Posterior vena cava (tissue), 2 donors: ENCODE measurements at regions of chr7 and their contacts with region 1.

Region 1: DNA sequence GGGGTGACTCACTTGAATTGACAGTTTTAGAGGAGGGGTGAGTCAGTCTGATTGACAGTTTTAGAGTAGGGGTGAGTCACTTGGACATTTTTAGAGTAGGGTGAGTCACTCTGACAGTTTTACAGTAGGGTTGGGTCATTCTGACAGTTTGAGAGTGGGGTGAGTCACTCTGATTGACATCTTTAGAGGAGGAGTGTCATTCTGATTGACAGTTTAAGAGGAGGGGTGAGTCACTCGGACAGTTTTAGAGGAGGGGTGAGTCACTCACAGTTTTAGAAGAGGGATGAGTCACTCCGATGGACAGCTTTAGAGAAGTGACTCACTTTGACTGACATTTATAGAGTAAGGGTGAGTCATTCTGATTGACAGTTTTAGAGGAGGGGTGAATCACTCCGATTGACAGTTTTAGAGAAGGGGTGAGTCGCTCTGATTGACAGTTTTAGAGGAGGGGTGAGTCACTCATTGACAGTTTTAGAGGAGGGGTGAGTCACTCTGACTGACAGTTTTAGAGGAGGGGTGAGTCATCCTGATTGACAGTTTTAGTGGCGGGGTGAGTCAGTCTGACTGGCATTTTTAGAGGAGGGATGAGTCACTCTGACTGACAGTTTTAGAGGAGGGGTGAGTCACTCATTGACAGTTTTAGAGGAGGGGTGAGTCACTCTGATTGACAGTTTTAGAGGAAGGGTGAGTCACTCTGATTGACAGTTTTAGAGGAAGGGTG is 595.9 kb downstream of the DNAJB6 start:
- DNase-seq: no peak

Region 2: DNA sequence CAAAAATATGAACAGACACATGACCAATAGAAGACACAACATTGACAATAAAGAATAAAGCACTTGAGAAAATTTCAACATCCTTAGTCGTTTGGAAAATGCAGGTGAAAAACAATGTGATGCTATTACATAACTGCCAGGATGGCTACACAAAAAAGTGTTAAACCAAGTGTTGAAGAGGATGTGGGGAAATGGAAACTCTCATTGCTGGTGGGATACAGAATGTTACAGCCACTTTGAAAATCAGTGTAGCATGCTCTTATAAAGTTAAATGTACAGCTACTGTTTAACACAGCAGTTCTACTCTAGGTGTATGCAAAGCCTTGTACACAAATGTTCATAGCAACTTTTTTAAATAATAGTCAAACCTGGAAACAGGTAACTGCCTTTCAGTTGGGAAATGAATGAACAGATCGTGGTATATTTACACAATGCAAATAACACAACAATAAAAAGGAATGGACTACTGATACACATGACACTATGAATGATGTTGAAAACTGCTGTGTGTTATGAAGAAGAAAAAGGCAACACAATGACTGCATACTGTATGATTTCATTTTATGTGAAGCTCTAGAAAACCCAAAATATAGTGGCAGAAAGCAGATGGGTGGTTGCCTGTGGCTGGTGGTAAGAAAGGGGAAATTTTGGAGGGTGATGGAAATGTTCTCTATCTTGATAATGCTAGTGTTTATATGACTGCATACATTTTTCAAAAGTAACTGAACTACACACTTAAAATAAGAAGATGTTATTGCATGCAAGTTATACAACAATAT is 1314.2 kb after region 1 on chr7:
- intact Hi-C with region 1: loop called in 1 of 2 experiments (anchors 5 kb)
- DNase-seq: no peak